ENCODE measurements at regions of chr4 and their contacts with region 1.

Region 1: DNA sequence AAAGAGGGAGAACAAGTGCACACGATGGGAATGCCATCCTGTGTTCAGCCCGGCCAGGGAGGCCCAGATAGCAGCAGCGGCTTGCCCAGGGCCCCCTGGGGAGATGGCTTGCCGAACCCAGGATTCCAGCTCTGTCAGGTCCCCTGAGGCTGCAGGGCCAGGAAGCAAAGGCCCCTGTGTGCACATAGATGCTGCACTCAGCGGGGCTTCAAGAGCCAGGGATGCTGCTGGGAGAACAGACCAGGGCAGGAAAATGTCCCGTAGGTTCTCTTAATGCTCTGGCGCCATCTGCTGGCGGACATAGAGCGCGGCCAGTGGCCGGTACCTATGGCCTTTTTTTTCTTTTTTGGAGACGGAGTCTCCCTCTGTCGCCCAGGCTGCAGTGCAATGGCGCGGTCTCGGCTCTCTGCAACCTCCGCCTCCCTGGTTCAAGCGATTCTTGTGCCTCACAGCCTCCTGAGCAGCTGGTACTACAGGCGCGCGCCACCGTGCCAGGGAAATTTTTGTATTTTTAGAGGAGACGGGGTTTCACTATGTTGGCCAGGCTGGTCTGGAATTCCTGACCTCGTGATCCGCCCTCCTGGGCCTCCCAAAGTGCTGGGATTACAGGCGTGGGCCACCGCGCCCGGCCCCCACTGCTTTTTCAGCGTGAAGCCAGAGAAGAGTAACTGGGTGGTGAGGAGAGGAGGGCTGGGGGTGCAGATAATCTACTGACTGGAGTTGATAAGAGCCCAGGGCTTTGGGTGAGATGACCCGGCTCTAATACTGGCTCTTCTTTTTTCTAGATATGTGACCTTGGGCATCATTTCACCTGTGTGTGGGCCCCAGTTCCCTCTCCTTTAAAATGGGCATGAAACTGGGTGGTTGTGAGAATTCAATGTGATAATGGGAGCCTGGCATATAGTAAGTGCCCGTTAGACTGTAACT is 22.5 kb downstream of the MED28 start:
- DNase-seq: peak; percentile 82
- ATAC-seq: peak; percentile 87 to 89

Region 2: DNA sequence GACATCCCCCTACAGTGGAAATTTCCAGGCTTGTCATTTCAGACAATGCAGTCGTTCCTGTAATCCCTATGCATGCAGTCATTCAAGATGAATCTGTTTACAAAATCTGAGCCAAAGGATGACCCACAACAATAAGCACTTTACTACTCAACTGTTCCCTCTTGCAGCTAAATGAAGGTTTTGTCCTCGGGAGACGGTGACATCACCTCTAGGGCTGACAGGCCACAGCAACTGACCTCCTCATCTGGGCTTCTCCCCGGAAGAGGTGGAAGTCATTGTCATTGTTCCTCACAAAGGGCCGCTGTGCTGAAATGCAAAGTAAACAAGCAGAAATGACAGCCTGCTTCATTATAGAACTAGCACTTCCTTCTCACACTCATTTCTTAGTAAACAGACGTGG is 92.8 kb before region 1 on chr4:
- intact Hi-C with region 1: loop called in 1 of 2 experiments (anchors 2 kb)
- DNase-seq: no peak
- ATAC-seq: no peak

Region 3: DNA sequence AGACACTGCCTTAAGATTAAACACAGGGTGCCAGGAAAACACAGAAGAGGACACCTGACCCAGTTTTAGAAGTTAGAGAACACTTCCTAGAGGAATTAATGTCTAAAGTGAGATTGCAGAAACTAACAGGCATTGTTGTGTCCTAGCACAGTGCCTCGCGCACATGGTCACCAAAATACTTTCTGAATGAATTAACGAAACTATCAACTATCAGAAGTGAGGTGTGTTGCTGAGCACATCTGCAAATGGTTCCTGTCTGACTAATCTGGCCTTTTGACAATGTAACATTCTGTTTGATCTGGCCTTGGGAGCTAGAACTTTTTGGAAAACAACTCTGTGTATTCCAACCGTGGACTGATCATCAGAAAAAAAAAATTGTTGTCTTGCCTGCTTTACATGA is 941.3 kb after region 1 on chr4:
- intact Hi-C with region 1: loop called in 1 of 2 experiments (anchors 10 kb)
- DNase-seq: no peak
- ATAC-seq: no peak